Colonic mucosa (tissue), 4 donors: ENCODE measurements at regions of chrX and their contacts with region 1.

Region 1: GRCh38 chrX:22192417-22193060 is 80.2 kb upstream of the CBLL2 start:
- DNase-seq: peak; percentile 59
- H3K4me3 ChIP-seq: no peak overlapping the region
- H3K27ac ChIP-seq: no peak overlapping the region
- H3K4me1 ChIP-seq: no peaks in the 10 kb centered on the region
- H3K27me3 ChIP-seq: no peaks in the 10 kb centered on the region
- CTCF ChIP-seq: peak; percentile 84

Region 2: DNA sequence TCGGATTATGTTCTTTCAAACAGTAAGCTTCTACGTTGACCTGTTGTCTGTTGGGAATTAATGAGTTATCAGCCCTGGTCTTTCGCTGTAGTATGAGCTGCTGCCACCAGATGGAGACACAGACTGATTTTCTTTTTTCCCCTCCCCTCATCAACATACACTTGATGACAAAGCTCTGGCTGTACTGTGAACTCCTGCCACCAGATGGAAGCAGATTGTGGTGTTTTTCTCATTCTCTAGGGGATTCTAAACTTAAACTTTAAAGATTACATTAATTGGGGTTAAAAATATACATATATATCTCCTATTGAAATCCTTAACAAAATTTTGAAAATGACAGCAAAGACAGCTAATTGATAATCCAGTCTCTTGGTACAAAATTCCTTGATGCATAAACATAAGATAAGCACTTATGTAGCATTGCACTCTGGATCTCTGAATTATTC is 207.2 kb before region 1 on chrX:
- intact Hi-C with region 1: loop called (anchors 5 kb)
- DNase-seq: peak; percentile 76
- H3K4me3 ChIP-seq: no peak overlapping the region
- H3K27ac ChIP-seq: no peak overlapping the region
- H3K4me1 ChIP-seq: no peaks in the 10 kb centered on the region
- H3K27me3 ChIP-seq: no peaks in the 10 kb centered on the region
- CTCF ChIP-seq: peak; percentile 92

Region 3: GRCh38 chrX:22081475-22082092 is 111.0 kb before region 1 on chrX:
- intact Hi-C with region 1: loop called (anchors 10 kb)
- DNase-seq: peak; percentile 60
- H3K4me3 ChIP-seq: no peak overlapping the region
- H3K27ac ChIP-seq: no peak overlapping the region
- H3K4me1 ChIP-seq: no peaks in the 10 kb centered on the region
- H3K27me3 ChIP-seq: no peaks in the 10 kb centered on the region
- CTCF ChIP-seq: peak; percentile 65

Region 4: DNA sequence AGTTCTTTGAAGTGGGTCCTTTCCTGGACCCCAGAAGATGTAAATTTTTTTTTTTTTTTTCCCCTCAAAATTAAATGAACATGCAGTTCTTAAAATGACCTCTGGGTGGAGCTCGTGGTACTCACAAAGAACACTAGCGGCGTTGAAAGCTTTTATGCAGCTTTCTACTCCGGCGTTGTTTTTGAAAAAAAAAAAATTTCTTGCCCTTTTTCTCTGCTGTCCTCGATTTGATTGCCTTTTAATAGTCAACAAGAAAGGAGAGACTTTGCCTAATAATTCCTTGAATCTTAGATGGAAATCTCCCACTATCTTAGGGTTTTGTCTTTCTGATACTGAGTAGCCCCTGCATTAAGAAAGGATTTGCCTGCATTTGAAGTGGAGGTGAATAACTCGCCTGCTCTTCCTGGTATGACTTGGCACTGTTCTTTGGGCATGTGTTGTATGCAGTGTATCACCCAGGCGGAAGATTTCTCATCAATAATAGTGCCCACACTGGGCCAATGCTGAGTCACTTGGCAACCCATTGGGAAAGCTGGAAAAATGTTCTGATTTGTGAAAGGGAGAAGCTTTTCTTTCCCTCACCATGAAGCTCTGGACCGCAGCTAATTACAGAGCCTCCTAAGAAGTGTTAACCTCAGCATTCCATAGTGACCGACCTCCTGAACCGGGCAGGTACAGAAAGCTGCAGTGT is 56.4 kb before region 1 on chrX:
- intact Hi-C with region 1: loop called (anchors 5 kb)
- DNase-seq: no peak
- H3K4me3 ChIP-seq: no peak overlapping the region
- H3K27ac ChIP-seq: no peak overlapping the region
- H3K4me1 ChIP-seq: no peaks in the 10 kb centered on the region
- H3K27me3 ChIP-seq: no peaks in the 10 kb centered on the region
- CTCF ChIP-seq: peak; percentile 87